ENCODE measurements at regions of chr1 and their contacts with region 1.

Region 1: GRCh38 chr1:214328770-214329469 is 48.0 kb downstream of the SMYD2 start:
- DNase-seq: peak; percentile 95
- H3K4me3 Mint-ChIP-seq: no peak overlapping the region
- H3K27ac Mint-ChIP-seq: no peak overlapping the region
- H3K4me1 Mint-ChIP-seq: no peaks in the 10 kb centered on the region
- H3K27me3 Mint-ChIP-seq: no peaks in the 10 kb centered on the region
- CTCF ChIP-seq: peak; percentile 100

Region 2: DNA sequence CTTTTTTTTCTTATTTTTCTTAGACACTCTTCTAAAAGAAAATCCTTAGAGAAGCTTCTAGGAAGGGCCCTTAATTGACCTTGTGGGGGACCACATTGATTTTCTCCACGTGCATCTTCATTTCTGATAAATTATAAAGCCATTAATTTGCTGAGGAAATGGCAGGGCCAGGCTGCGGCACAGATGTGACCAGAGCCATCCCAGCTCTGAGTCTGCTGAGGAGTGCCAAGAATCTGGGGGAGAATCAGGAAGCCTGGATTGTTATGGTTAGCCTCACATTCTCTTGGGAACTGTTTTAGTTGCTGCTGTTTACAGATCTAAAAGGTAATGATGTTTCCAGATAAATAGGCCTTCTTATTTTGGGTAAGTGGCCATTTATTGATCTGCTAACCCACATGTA is 324.9 kb before region 1 on chr1:
- CTCF ChIA-PET with region 1: no interaction called
- POLR2A ChIA-PET with region 1: no interaction called
- intact Hi-C with region 1: no loop called
- DNase-seq: no peak
- H3K4me3 Mint-ChIP-seq: no peak overlapping the region
- H3K27ac Mint-ChIP-seq: no peak overlapping the region
- H3K4me1 Mint-ChIP-seq: peaks cover 6% of the 10 kb centered on the region
- H3K27me3 Mint-ChIP-seq: peaks cover 53% of the 10 kb centered on the region
- CTCF ChIP-seq: no peak

Region 3: GRCh38 chr1:214205053-214205452 is 123.9 kb before region 1 on chr1:
- CTCF ChIA-PET with region 1: interaction called, 71 read pairs
- POLR2A ChIA-PET with region 1: no interaction called
- intact Hi-C with region 1: no loop called
- DNase-seq: no peak
- H3K4me3 Mint-ChIP-seq: no peak overlapping the region
- H3K27ac Mint-ChIP-seq: no peak overlapping the region
- H3K4me1 Mint-ChIP-seq: no peaks in the 10 kb centered on the region
- H3K27me3 Mint-ChIP-seq: peaks cover 2% of the 10 kb centered on the region
- CTCF ChIP-seq: no peak

Region 4: GRCh38 chr1:214281021-214281719 is 47.8 kb before region 1 on chr1 and contains the start of gene SMYD2:
- CTCF ChIA-PET with region 1: interaction called, 332 read pairs
- POLR2A ChIA-PET with region 1: interaction called, 5 read pairs
- intact Hi-C with region 1: no loop called
- DNase-seq: peak; percentile 84
- H3K4me3 Mint-ChIP-seq: peak within 1 kb of the TSS; percentile 89
- H3K27ac Mint-ChIP-seq: peak within 1 kb of the TSS; percentile 84
- H3K4me1 Mint-ChIP-seq: peaks cover 37% of the 10 kb centered on the region
- H3K27me3 Mint-ChIP-seq: no peaks in the 10 kb centered on the region
- CTCF ChIP-seq: no peak
- total RNA-seq, gene SMYD2: 54.5 and 75.1 TPM in 2 replicates

Region 5: GRCh38 chr1:214391873-214392645 is 63.1 kb after region 1 on chr1:
- CTCF ChIA-PET with region 1: interaction called, 17 read pairs
- POLR2A ChIA-PET with region 1: interaction called, 4 read pairs
- intact Hi-C with region 1: no loop called
- DNase-seq: no peak
- H3K4me3 Mint-ChIP-seq: no peak overlapping the region
- H3K27ac Mint-ChIP-seq: no peak overlapping the region
- H3K4me1 Mint-ChIP-seq: peaks cover 16% of the 10 kb centered on the region
- H3K27me3 Mint-ChIP-seq: no peaks in the 10 kb centered on the region
- CTCF ChIP-seq: no peak

Region 6: GRCh38 chr1:214537219-214537618 is 208.3 kb after region 1 on chr1:
- CTCF ChIA-PET with region 1: interaction called, 30 read pairs
- POLR2A ChIA-PET with region 1: no interaction called
- intact Hi-C with region 1: no loop called
- DNase-seq: peak; percentile 61
- H3K4me3 Mint-ChIP-seq: no peak overlapping the region
- H3K27ac Mint-ChIP-seq: no peak overlapping the region
- H3K4me1 Mint-ChIP-seq: peaks cover 47% of the 10 kb centered on the region
- H3K27me3 Mint-ChIP-seq: no peaks in the 10 kb centered on the region
- CTCF ChIP-seq: no peak

Region 7: DNA sequence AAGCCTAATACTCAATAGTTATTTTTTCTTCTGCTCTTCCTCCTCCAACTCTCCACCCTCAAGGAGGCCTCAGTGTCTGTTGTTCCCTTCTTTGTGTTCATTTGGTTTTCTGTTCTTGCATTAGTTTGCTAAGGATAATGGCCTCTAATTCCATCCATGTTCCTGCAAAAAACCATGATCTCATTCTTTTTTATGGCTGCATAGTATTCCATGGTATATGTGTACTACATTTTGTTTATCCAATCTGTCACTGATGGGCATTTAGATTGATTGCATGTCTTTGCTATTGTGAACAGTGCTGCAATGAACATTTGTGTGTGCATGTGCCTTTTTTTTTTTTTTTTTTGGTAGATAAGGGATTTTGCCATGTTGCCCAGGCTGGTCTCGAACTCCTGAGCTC is 280.8 kb after region 1 on chr1:
- CTCF ChIA-PET with region 1: interaction called, 74 read pairs
- POLR2A ChIA-PET with region 1: interaction called, 5 read pairs
- intact Hi-C with region 1: loop called (anchors 1 kb)
- DNase-seq: no peak
- H3K4me3 Mint-ChIP-seq: no peak overlapping the region
- H3K27ac Mint-ChIP-seq: no peak overlapping the region
- H3K4me1 Mint-ChIP-seq: peaks cover 29% of the 10 kb centered on the region
- H3K27me3 Mint-ChIP-seq: no peaks in the 10 kb centered on the region
- CTCF ChIP-seq: no peak